Panc1 (cell line): ENCODE measurements at regions of chr11 and their contacts with region 1.

Region 1: GRCh38 chr11:7665473-7666291 is 7.6 kb downstream of the CYB5R2 start:
- DNase-seq: peak; percentile 79
- ATAC-seq: peak; percentile 99
- H3K4me3 ChIP-seq: no peak overlapping the region
- H3K27ac ChIP-seq: no peak overlapping the region
- H3K4me1 ChIP-seq: no peaks in the 10 kb centered on the region
- H3K27me3 ChIP-seq: no peaks in the 10 kb centered on the region
- CTCF ChIP-seq: peak; percentile 97

Region 2: DNA sequence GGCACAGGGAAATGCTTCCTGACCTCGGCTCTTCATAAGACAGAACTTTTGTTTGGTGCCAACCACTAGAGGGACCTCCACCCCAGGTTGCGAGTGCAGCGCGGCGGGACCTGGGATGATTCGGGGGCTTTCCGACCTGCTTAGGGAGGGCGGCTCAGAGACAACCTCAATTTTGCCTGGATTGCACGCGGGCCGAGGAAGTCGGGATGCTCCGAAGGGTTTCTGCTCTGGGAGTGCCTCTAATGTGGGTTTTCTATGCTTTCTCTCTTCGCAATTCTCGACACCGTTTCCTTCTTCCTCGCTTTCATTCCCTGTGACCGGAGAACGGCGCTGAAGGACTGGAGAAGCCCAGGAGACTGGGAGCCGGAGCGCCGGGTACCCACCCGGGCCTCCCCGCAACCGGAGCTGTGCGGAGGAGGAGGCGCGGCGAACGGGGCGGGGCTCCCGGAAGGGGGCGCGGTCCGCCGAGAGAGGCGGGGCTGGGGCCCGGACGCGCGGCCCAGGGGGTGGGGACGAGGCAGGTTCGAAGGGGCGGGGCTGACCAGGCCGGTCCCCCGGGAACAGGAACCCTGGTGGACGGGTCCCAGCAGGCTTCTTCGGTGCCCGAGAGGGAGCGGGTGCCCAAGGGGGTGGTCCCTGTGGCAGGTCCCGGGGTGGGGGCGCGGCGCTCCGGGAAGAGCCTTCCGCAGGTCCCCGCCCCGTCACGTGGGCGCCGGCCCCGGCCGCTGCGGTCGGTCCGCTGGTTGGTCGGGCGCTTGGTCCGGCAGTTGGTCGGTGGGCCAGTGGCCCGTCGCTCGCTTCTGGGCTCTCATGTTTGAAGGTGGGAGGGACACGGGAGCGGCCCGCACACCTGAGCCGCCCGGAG is 152.2 kb before region 1 on chr11 and contains the start of gene PPFIBP2:
- CTCF ChIA-PET with region 1: interaction called, 4 read pairs
- POLR2A ChIA-PET with region 1: no interaction called
- in situ Hi-C with region 1: no loop called
- intact Hi-C with region 1: loop called (anchors 2 kb)
- DNase-seq: peak; percentile 48
- ATAC-seq: peak; percentile 96
- H3K4me3 ChIP-seq: peak within 1 kb of the TSS; percentile 80 to 96
- H3K27ac ChIP-seq: peak within 1 kb of the TSS; percentile 80
- H3K4me1 ChIP-seq: peaks cover 17% of the 10 kb centered on the region
- H3K27me3 ChIP-seq: peaks cover 6% of the 10 kb centered on the region; the same call in 1 of the 2 replicates
- CTCF ChIP-seq: peak; percentile 96
- total RNA-seq, gene PPFIBP2: 21.5 TPM

Region 3: GRCh38 chr11:7571640-7572000 is 94.1 kb before region 1 on chr11:
- CTCF ChIA-PET with region 1: interaction called, 21 read pairs
- POLR2A ChIA-PET with region 1: no interaction called
- in situ Hi-C with region 1: no loop called
- intact Hi-C with region 1: loop called (anchors 2 kb)
- DNase-seq: peak; percentile 47
- ATAC-seq: peak; percentile 92
- H3K4me3 ChIP-seq: no peak overlapping the region
- H3K27ac ChIP-seq: no peak overlapping the region
- H3K4me1 ChIP-seq: peaks cover 8% of the 10 kb centered on the region; the same call in 1 of the 2 replicates
- H3K27me3 ChIP-seq: no peaks in the 10 kb centered on the region
- CTCF ChIP-seq: peak; percentile 99

Region 4: DNA sequence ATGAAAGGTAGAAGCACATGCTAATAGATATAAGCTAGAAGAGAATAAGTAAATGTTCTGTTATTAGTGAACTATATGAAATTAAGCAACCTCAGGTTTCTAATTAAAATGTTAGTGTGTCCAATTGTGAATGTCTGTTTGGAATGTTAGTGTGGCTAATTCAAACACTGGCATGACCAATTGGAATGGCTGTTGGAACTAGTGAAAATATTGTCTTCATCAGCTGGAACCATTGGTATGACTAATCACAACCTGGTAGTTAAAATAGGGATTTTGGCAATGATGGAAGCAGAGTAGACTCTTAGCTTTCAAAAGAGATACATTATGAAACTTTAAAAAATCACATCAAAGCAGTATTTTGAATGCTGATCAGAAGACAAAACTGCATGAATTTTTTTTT is 59.2 kb before region 1 on chr11:
- CTCF ChIA-PET with region 1: interaction called, 11 read pairs
- POLR2A ChIA-PET with region 1: no interaction called
- in situ Hi-C with region 1: no loop called
- intact Hi-C with region 1: no loop called
- DNase-seq: no peak
- ATAC-seq: no peak
- H3K4me3 ChIP-seq: no peak overlapping the region
- H3K27ac ChIP-seq: no peak overlapping the region
- H3K4me1 ChIP-seq: no peaks in the 10 kb centered on the region
- H3K27me3 ChIP-seq: no peaks in the 10 kb centered on the region
- CTCF ChIP-seq: no peak